ENCODE measurements at regions of chr18 and their contacts with region 1.

Region 1: GRCh38 chr18:12726774-12727550 is 24.1 kb downstream of the PSMG2 start:
- H3K4me3 ChIP-seq: no peak overlapping the region
- H3K27ac ChIP-seq: no peak overlapping the region
- H3K4me1 ChIP-seq: no peaks in the 10 kb centered on the region
- CTCF ChIP-seq: peak; percentile 73

Region 2: DNA sequence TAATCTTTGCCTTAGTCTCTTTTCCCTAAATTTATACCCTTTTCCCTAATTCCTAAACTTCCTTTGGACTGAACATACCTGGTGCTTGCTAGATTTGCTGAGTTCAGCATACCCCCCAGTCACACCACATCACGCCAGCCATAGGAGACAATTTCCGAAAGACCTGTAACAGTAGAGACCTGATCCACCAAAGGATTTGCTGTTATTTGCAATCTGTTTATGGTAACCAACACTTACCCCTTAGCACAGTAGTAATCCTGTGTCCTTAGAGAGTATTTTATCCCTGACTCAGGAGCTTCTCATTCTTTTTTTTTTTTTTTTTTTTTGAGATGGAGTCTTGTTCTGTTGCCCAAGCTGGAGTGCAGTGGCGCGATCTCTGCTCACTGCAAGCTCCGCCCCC is 15.5 kb before region 1 on chr18:
- CTCF ChIA-PET with region 1: interaction called, 12 read pairs
- POLR2A ChIA-PET with region 1: no interaction called
- H3K4me3 ChIP-seq: no peak overlapping the region
- H3K27ac ChIP-seq: no peak overlapping the region
- H3K4me1 ChIP-seq: no peaks in the 10 kb centered on the region
- CTCF ChIP-seq: no peak

Region 3: GRCh38 chr18:12737243-12737902 is 10.4 kb after region 1 on chr18:
- CTCF ChIA-PET with region 1: interaction called, 10 read pairs
- POLR2A ChIA-PET with region 1: no interaction called
- H3K4me3 ChIP-seq: no peak overlapping the region
- H3K27ac ChIP-seq: no peak overlapping the region
- H3K4me1 ChIP-seq: peaks cover 6% of the 10 kb centered on the region; the same call in 1 of the 2 replicates
- CTCF ChIP-seq: no peak

Region 4: GRCh38 chr18:12744103-12744502 is 17.1 kb after region 1 on chr18:
- CTCF ChIA-PET with region 1: interaction called, 20 read pairs
- POLR2A ChIA-PET with region 1: no interaction called
- H3K4me3 ChIP-seq: no peak overlapping the region
- H3K27ac ChIP-seq: no peak overlapping the region
- H3K4me1 ChIP-seq: peaks cover 6% of the 10 kb centered on the region; the same call in 1 of the 2 replicates
- CTCF ChIP-seq: peak; percentile 39; the same call in 1 of the 2 replicates

Region 5: DNA sequence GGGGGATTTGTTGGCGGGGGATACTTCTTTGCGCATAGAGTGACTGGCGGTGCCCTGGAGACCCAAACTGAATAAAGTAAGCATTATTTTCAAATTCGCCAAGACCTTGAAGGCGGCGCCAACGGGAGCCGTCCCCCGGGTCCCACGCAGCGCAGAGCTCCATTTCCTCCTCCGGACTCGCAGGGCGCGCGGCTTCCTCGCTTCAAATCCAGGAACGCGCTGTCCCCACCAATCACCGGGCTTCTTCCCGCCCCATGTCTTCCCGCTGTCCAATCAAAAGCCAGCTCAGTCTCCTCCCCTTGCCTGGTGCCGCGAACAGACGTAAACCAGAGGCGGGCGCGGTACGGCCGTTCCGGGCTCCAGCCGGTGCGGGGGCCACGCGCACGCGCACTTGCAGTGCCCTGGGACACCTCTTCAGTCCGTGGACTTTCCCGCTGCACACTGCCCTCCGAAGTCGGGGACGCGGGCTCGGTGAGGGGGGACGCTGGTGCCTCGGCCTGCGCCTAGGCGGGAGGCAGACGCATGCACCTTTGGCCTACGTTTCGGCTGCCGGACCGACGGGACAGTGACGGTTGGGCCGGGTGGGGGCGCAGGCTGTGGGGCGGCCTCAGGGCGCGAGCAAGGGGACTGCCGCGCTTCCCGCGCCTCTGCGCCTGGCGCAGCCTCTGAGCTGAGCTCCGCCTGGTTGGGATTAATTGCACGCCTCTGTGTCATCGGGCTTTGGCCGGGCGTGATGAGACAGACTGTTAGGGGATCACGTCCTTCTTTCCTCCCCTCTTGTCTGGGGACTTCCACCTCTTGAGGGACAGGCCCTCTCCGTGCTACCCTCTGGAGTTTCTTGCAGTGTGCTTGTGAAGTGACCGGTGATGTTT is 264.2 kb after region 1 on chr18 and contains the start of gene CEP192:
- CTCF ChIA-PET with region 1: no interaction called
- POLR2A ChIA-PET with region 1: no interaction called
- H3K4me3 ChIP-seq: peak within 1 kb of the TSS; percentile 83
- H3K27ac ChIP-seq: peak within 1 kb of the TSS; percentile 91
- H3K4me1 ChIP-seq: peaks cover 13% of the 10 kb centered on the region; the same call in 1 of the 2 replicates
- CTCF ChIP-seq: peak; percentile 96

Measured in HEK293 (cell line).